Natural killer cell (primary cell): ENCODE measurements at regions of chr7 and their contacts with region 1.

Region 1: DNA sequence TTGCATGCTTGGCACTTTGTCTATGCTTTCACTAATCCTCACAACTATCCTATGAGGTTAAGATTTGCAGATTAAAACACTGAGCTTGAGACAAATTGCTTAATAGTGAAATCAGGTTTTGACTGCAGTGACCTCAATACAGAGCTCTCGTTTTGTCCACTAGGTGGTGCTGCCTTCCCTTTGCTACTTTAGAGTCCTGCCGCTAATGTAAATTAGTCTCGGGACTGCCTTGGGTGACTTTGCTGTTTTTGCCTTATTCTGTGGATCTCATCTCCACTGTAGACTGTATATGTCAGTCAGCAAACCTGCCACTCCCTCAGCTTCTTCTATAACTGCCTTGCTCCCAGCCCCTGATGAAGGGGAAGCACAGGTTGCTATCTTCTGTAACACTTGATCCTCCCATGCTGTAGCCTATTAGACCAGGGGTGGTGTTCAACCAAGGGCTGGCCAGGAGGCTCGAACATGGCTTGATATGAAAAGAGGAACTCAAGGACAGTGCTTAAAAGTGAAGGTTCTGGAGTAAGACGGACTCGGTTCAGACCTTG is 26.0 kb downstream of the ASB4 start:
- DNase-seq: peak; percentile 33 to 66
- ATAC-seq: peak; percentile 85 to 93 (median 91)
- H3K4me3 ChIP-seq: no peak overlapping the region
- H3K4me3 Mint-ChIP-seq: no peak overlapping the region
- H3K27ac ChIP-seq: no peak overlapping the region
- H3K27ac Mint-ChIP-seq: no peak overlapping the region
- H3K4me1 ChIP-seq: peaks cover 4% of the 10 kb centered on the region
- H3K4me1 Mint-ChIP-seq: no peaks in the 10 kb centered on the region
- H3K27me3 ChIP-seq: no peaks in the 10 kb centered on the region
- H3K27me3 Mint-ChIP-seq: peaks cover 0 to 8% of the 10 kb centered on the region in 2 donors
- CTCF ChIP-seq: peak; percentile 81

Region 2: GRCh38 chr7:95376632-95377315 is 135.0 kb before region 1 on chr7:
- intact Hi-C with region 1: no loop called
- DNase-seq: peak in 1 of 2 donors; percentile 11
- ATAC-seq: no peak
- H3K4me3 ChIP-seq: no peak overlapping the region
- H3K4me3 Mint-ChIP-seq: no peak overlapping the region
- H3K27ac ChIP-seq: no peak overlapping the region
- H3K27ac Mint-ChIP-seq: no peak overlapping the region
- H3K4me1 ChIP-seq: no peaks in the 10 kb centered on the region
- H3K4me1 Mint-ChIP-seq: no peaks in the 10 kb centered on the region
- H3K27me3 ChIP-seq: no peaks in the 10 kb centered on the region
- H3K27me3 Mint-ChIP-seq: peaks cover 0 to 8% of the 10 kb centered on the region in 2 donors
- CTCF ChIP-seq: no peak

Region 3: GRCh38 chr7:95421000-95421846 is 90.6 kb before region 1 on chr7:
- intact Hi-C with region 1: no loop called
- DNase-seq: no peak
- ATAC-seq: no peak
- H3K4me3 ChIP-seq: no peak overlapping the region
- H3K4me3 Mint-ChIP-seq: no peak overlapping the region
- H3K27ac ChIP-seq: no peak overlapping the region
- H3K27ac Mint-ChIP-seq: no peak overlapping the region
- H3K4me1 ChIP-seq: no peaks in the 10 kb centered on the region
- H3K4me1 Mint-ChIP-seq: peaks cover 11 to 22% of the 10 kb centered on the region in 2 donors
- H3K27me3 ChIP-seq: no peaks in the 10 kb centered on the region
- H3K27me3 Mint-ChIP-seq: no peaks in the 10 kb centered on the region
- CTCF ChIP-seq: no peak

Region 4: DNA sequence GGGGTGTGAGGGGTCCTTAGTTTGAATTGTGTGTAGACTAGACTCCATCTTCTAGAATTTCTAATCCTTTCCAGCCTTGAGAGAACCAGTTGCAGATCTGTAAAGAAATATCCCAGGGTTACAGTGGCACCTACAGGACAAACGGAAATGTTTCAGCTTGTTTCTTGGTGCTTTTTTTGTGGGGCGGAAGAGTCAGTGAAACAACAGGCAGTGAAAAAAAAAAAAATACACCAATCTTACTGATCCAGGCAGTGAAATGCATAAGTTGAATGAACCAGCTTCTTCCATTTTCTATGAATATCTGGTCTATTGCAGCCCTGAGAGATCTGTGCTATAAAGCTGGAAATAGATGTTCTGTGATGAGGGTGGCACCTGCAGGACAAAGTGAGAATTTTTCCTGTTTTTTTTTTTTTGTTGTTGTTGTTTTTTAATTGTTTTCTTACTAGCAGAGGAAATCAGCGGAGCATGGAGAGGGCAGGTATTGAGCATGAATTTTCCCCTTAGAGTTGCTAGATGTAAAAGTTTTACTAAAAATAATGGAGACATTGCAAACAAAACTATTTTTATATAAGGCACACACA is 178.7 kb after region 1 on chr7:
- intact Hi-C with region 1: loop called (anchors 1 kb)
- DNase-seq: peak in 1 of 2 donors; percentile 13
- ATAC-seq: peak; percentile 68 to 78 (median 77)
- H3K4me3 ChIP-seq: no peak overlapping the region
- H3K4me3 Mint-ChIP-seq: no peak overlapping the region
- H3K27ac ChIP-seq: no peak overlapping the region
- H3K27ac Mint-ChIP-seq: no peak overlapping the region
- H3K4me1 ChIP-seq: no peaks in the 10 kb centered on the region
- H3K4me1 Mint-ChIP-seq: peaks cover 5 to 7% of the 10 kb centered on the region in 2 donors
- H3K27me3 ChIP-seq: no peaks in the 10 kb centered on the region
- H3K27me3 Mint-ChIP-seq: peaks cover 7 to 12% of the 10 kb centered on the region in 2 donors
- CTCF ChIP-seq: peak; percentile 82

Region 5: DNA sequence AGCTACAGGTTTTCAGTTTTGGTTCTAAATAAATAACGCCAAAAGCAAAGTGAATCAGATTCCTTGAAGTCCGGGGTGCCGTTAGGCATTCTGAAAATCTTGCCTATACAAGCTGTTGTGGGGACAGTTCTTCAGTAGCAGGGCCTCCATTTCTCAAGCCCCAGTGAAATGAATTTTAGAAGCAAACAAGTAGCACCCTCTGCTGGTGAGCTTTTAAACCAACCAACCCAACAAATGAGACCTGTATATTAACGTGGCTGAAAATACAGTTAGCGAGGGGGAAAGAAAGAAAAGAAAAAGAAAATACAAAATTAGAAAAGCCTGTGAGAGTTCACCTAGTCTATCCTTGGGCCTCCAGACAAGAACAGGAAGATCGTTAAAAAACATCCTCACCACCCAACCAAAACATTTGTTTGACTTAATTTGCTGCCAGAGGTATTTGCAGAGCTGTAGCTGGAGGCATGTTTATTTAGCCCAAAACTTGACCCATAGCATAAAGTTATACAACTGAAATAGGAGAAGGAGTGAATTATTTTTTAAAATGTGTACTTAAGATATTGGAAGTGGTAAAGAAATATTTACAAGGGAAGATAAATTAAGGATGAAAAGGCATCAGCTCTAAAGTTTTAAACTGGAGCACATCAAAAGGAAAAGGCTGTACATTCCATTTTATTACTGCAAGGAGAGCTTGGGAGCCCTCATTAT is 359.4 kb after region 1 on chr7:
- intact Hi-C with region 1: loop called (anchors 10 kb)
- DNase-seq: peak in 1 of 2 donors; percentile 7
- ATAC-seq: peak in 1 of 3 donors; percentile 34
- H3K4me3 ChIP-seq: no peak overlapping the region
- H3K4me3 Mint-ChIP-seq: no peak overlapping the region
- H3K27ac ChIP-seq: no peak overlapping the region
- H3K27ac Mint-ChIP-seq: no peak overlapping the region
- H3K4me1 ChIP-seq: no peaks in the 10 kb centered on the region
- H3K4me1 Mint-ChIP-seq: no peaks in the 10 kb centered on the region
- H3K27me3 ChIP-seq: no peaks in the 10 kb centered on the region
- H3K27me3 Mint-ChIP-seq: peaks cover 5 to 25% of the 10 kb centered on the region in 2 donors
- CTCF ChIP-seq: no peak